ENCODE measurements at regions of chr2 and their contacts with region 1.

Region 1: GRCh38 chr2:201231781-201232466 is 28.4 kb upstream of the CASP8 start:
- DNase-seq: peak; percentile 98
- H3K4me3 ChIP-seq: no peak overlapping the region
- H3K27ac ChIP-seq: peak overlapping the region; percentile 90
- H3K4me1 ChIP-seq: peaks cover 9% of the 10 kb centered on the region
- H3K27me3 ChIP-seq: no peaks in the 10 kb centered on the region
- CTCF ChIP-seq: peak; percentile 87

Region 2: DNA sequence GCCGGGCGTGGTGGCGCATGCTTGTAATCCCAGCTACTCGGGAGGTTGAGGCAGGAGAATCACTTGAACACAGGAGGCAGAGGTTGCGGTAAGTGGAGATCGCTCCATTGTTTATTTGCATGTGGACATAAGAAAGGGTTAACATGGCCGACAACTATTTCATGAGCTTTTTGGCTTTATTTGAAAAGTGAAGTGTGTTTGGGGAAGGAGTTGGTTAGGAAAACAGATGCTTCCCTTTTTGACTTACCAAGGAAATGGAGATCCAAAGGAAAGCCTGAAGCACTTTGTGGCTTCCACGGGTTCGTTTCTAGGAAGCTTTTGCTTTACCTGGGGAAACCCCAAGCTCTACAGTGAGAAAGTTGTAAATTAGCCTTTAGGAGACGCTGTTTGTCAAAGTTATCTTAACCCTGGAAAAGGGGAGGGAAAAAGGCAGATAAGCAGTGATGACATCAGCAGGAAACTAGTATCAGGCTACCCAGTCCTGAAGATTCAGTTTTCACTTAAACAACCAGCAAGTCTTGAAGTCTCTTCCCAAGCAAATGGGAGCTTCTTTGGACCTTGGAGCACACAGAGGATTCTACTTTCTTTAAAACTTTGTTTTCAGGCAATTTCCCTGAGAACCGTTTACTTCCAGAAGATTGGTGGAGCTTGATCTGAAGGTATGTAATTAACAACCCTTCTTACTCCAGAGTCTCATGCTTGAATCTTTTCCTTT is 49.1 kb before region 1 on chr2 and contains the start of gene CASP10:
- intact Hi-C with region 1: loop called (anchors 5 kb)
- DNase-seq: peak; percentile 65
- H3K4me3 ChIP-seq: peak within 1 kb of the TSS; percentile 53
- H3K27ac ChIP-seq: peak within 1 kb of the TSS; percentile 72
- H3K4me1 ChIP-seq: peaks cover 3% of the 10 kb centered on the region
- H3K27me3 ChIP-seq: no peaks in the 10 kb centered on the region
- CTCF ChIP-seq: peak; percentile 27
- total RNA-seq, gene CASP10: 28.0 to 52.3 TPM

Region 3: DNA sequence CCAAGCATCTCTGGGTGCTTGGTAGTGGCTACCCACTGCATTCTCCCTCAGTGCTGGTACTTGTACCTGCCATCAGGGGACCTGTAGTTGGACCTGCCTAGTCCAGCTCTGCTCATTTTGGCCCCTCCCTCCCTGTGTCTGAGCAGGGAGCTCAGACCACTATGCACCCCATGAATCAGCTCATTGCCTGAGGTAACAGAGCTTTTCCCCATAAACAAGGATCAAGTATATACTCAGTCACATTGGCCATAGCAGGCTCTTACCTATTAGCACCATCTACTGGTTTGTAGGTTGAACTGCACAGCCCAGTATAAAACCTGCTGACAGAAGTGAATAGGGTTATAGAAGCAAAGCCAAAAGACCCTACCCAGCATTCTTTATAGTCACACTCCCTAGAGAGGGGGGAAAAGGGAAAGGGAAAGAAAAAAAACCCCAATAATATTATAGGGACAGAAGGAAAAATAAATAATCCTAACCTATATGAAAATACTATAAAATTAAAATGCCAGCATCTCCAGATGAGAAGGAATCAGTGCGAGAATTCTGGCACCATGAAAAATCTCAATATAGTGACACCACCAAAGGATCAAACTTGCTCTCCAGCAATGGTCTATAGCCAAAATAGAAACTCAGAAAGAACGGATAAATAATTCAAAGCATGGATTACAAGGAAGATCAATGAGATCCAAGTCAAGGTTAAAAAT is 132.1 kb after region 1 on chr2:
- intact Hi-C with region 1: loop called (anchors 5 kb)
- DNase-seq: no peak
- H3K4me3 ChIP-seq: no peak overlapping the region
- H3K27ac ChIP-seq: no peak overlapping the region
- H3K4me1 ChIP-seq: no peaks in the 10 kb centered on the region
- H3K27me3 ChIP-seq: no peaks in the 10 kb centered on the region
- CTCF ChIP-seq: peak; percentile 88